Activated T-helper 1 cell treated with anti-CD3 and anti-CD28 coated beads, Interleukin-12 subunit alpha, Interleukin-12 subunit beta, Interleukin-2, Interleukin-4 antibody, amounts not matched to agents 30 ng/mL and 10 ng/mL and 1 ng/mL, durations not matched to agents 14 hours and 24 hours and 36 hours (primary cell): ENCODE measurements at regions of chr14 and their contacts with region 1.

Region 1: DNA sequence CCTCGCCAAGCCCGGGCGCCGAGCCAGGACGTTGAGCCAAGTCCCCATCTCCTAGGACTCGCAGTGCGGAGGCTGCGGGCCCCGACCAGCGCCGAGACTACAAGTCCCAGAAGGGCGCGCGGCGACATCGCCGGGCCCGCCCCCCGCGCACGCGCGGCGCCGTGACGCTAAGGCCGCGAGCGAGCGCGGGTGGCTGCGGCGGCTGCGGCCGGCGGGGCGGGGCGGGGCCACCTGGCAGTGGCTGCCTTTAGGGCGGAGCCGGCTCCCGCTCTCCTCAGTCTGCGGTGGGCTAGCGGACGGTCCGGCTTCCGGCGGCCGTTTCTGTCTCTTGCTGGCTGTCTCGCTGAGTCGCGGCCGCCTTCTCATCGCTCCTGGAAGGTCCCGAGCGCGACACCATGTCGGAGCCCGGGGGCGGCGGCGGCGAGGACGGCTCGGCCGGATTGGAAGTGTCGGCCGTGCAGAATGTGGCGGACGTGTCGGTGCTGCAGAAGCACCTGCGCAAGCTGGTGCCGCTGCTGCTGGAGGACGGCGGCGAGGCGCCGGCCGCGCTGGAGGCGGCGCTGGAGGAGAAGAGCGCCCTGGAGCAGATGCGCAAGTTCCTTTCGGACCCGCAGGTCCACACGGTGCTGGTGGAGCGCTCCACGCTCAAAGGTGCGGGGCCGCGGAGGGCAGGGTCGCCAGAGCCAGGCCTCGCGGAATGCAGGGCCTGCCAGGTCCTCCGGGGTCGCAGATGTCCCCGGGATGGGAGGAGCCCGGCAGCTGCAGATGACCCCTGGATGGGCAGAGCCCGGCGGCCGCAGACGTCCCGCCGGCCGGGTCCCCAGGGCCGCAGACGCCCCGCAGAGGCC is at the start of gene DYNC1H1:
- DNase-seq: peak; percentile 89
- H3K4me3 Mint-ChIP-seq: peak within 1 kb of the TSS; percentile 90
- H3K27ac Mint-ChIP-seq: peak within 1 kb of the TSS; percentile 93
- H3K4me1 Mint-ChIP-seq: peaks cover 38% of the 10 kb centered on the region
- H3K27me3 Mint-ChIP-seq: peaks cover 2% of the 10 kb centered on the region
- total RNA-seq, gene DYNC1H1: 241 and 254 TPM in 2 replicates

Region 2: DNA sequence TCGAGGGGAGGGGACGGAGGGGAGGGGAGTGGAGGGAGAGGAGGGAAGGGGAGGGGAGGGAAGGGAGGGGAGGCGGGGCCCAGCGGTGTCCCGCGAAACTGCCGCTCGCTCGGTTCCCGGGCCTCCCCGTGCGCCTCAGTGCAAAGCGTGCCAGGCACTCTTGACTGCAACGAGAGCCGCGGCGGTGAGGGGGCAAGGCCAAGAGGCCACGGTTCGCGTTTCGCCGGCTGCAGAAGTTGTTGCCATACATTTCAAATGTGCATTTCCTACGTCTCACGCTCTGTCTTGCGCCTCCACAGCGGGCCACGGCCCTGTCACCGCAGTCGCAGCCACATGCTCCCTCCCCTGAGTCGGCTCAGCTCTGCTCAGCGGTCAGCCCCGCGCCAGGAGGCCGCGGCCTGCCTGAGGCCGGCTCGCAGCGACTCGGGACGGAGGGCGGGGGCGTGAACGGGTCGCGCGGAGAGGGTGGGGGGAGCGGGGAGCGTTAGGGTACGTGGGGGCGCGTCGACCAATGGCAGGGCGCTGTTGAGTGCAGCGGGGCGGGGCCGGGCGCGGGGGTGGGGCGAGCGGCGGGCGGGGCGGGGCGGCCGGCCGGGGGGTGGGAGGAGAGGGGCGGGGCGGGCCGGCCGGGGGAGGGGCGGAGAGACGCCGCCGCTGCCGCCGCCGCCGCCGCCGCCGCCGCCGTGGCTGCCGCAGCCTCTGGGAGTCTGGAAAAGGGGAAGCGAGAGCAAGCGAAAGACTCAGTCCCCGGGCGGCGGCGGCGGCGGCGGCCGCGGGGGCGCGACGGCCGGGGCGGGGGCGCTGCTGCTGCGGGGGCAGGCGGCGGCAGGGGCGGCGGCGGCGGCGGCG is 203.3 kb before region 1 on chr14 and contains the start of gene PPP2R5C:
- intact Hi-C with region 1: loop called (anchors 1 kb)
- DNase-seq: peak; percentile 72
- H3K4me3 Mint-ChIP-seq: peak within 1 kb of the TSS; percentile 90
- H3K27ac Mint-ChIP-seq: peak within 1 kb of the TSS; percentile 79
- H3K4me1 Mint-ChIP-seq: peaks cover 33% of the 10 kb centered on the region
- H3K27me3 Mint-ChIP-seq: peaks cover 3% of the 10 kb centered on the region
- total RNA-seq, gene PPP2R5C: 157 and 166 TPM in 2 replicates

Region 3: GRCh38 chr14:101767618-101768362 is 196.7 kb before region 1 on chr14:
- intact Hi-C with region 1: loop called (anchors 2 kb)
- DNase-seq: no peak
- H3K4me3 Mint-ChIP-seq: no peak overlapping the region
- H3K27ac Mint-ChIP-seq: no peak overlapping the region
- H3K4me1 Mint-ChIP-seq: peaks cover 36% of the 10 kb centered on the region
- H3K27me3 Mint-ChIP-seq: no peaks in the 10 kb centered on the region

Region 4: DNA sequence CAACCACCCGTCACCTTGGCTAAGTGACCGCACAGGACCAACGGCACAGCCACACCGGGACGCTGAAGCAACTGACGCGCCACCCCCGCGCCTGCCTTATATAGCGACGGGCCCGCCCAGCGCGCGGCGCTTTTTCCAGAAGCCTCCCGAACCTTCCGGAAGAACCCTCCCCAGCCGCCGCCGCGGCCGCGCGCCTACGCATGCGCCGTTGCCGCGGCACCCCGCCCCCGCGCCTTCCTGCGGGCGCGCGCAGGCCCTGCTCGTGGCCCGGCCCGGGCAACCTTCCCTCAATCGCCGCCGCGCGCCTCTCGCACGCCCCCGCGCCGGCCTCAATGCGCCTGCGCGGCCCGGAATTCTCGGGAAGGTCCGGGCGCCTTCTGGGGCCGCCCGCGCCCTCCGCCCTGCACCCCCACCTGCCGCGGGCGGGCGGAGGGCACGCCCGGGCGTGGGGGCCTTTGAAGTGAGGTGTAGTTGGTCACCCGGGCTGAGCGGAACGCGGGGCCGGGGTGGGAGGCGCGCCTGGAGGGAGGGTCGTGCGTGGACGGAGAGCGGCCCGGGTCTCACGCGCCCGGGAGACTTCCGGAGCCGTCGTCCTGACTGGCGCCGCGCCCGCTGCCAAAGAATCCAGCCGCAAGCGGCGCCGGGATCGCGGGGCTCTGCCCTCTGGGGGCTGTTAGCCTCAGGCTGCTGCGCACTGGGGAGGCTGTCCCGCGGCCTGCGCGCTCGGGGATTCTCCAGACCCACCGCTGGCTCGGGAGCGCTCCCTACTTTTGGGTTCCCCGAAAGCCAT is 122.6 kb after region 1 on chr14 and contains the start of gene HSP90AA1:
- intact Hi-C with region 1: loop called (anchors 1 kb)
- DNase-seq: peak; percentile 94
- H3K4me3 Mint-ChIP-seq: peak within 1 kb of the TSS; percentile 99
- H3K27ac Mint-ChIP-seq: peak within 1 kb of the TSS; percentile 97
- H3K4me1 Mint-ChIP-seq: peaks cover 63% of the 10 kb centered on the region
- H3K27me3 Mint-ChIP-seq: no peaks in the 10 kb centered on the region
- total RNA-seq, gene HSP90AA1: 993 and 995 TPM in 2 replicates

Region 5: GRCh38 chr14:102096214-102097114 is 131.9 kb after region 1 on chr14:
- intact Hi-C with region 1: loop called (anchors 1 kb)
- DNase-seq: peak; percentile 31
- H3K4me3 Mint-ChIP-seq: no peak overlapping the region
- H3K27ac Mint-ChIP-seq: no peak overlapping the region
- H3K4me1 Mint-ChIP-seq: peaks cover 24% of the 10 kb centered on the region
- H3K27me3 Mint-ChIP-seq: no peaks in the 10 kb centered on the region

Region 6: GRCh38 chr14:102304611-102305509 is 340.3 kb after region 1 on chr14 and contains the start of gene MOK:
- intact Hi-C with region 1: loop called (anchors 1 kb)
- DNase-seq: peak; percentile 98
- H3K4me3 Mint-ChIP-seq: peak within 1 kb of the TSS; percentile 96
- H3K27ac Mint-ChIP-seq: peak within 1 kb of the TSS; percentile 87
- H3K4me1 Mint-ChIP-seq: peaks cover 12% of the 10 kb centered on the region
- H3K27me3 Mint-ChIP-seq: peaks cover 10% of the 10 kb centered on the region
- total RNA-seq, gene MOK: 6.0 and 7.0 TPM in 2 replicates

Region 7: GRCh38 chr14:102509744-102510615 is 545.5 kb after region 1 on chr14 and contains the start of gene ANKRD9:
- intact Hi-C with region 1: loop called (anchors 2 kb)
- DNase-seq: peak; percentile 89
- H3K4me3 Mint-ChIP-seq: peak within 1 kb of the TSS; percentile 84
- H3K27ac Mint-ChIP-seq: peak within 1 kb of the TSS; percentile 55
- H3K4me1 Mint-ChIP-seq: peaks cover 14% of the 10 kb centered on the region
- H3K27me3 Mint-ChIP-seq: no peaks in the 10 kb centered on the region
- total RNA-seq, gene ANKRD9: 13.4 TPM in 2 replicates